WTC11 (cell line): ENCODE measurements at regions of chr3 and their contacts with region 1.

Region 1: DNA sequence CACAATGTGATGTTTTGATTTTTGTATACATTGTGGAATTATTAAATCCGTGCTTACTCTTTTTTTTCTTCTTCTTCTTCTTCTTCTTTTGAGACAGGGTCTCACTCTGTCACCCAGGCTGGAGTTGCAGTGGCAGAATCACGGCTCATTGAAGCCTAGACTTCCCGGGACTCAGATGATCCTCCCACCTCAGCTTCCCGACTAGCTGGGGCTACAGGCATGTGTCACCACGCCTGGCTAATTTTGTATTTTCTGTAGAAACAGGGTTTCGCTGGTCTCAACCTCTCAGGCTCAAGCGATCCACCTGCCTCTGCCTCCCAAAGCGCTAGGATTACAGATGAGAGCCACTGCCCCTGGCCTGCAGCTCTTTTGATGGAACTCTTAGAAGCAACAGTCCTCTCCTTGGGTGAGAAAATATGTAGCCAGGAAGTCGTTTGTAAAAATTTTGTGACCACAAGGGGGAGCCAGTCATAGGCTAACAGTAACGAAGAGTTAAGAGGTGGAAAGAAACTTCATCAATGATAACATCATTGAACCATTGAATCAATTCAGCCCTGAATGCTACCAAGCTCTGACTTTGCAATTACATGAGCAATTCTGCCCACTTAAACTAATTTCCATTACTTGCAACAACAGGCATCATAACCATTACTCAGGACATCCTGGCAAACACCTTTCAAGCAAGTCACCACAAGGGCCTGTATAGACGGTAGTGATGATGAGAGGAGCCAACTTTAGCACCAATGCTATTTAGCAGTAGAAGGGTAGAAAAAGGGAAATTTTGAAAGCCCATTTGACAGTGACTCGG is 16.7 kb upstream of the CMTM7 start:
- DNase-seq: peak; percentile 54
- ATAC-seq: peak; percentile 86
- H3K4me3 Mint-ChIP-seq: no peak overlapping the region
- H3K27ac Mint-ChIP-seq: peak overlapping the region; percentile 66; the same call in 1 of the 2 replicates
- H3K4me1 Mint-ChIP-seq: peaks cover 5% of the 10 kb centered on the region
- H3K27me3 Mint-ChIP-seq: no peaks in the 10 kb centered on the region
- CTCF ChIP-seq: peak; percentile 67

Region 2: GRCh38 chr3:32325957-32326356 is 49.0 kb before region 1 on chr3:
- CTCF ChIA-PET with region 1: interaction called, 16 read pairs
- POLR2A ChIA-PET with region 1: no interaction called
- DNase-seq: no peak
- ATAC-seq: no peak
- H3K4me3 Mint-ChIP-seq: no peak overlapping the region
- H3K27ac Mint-ChIP-seq: peak overlapping the region; percentile 13; the same call in 1 of the 2 replicates
- H3K4me1 Mint-ChIP-seq: peaks cover 47% of the 10 kb centered on the region
- H3K27me3 Mint-ChIP-seq: no peaks in the 10 kb centered on the region
- CTCF ChIP-seq: no peak

Region 3: DNA sequence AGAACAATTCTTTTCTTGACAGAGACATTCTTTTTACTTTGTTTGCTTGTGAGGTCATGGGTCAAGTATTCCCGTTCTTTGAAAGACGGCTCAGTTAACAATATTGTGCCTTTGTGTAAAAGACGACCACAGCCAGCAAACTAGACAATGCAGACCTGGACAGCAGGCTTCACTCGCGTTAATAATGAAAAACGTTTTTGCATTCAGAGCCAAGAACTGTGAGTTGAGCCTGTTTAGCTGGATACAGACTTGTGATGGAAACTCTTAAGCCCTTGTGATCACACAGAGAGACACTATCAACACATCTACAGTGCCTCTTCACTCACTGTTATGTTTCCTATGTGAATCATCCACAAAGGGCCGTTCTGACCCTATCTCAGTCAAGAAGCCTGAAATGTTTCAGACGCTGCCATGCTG is 20.6 kb before region 1 on chr3:
- CTCF ChIA-PET with region 1: interaction called, 10 read pairs
- POLR2A ChIA-PET with region 1: no interaction called
- DNase-seq: no peak
- ATAC-seq: no peak
- H3K4me3 Mint-ChIP-seq: no peak overlapping the region
- H3K27ac Mint-ChIP-seq: no peak overlapping the region
- H3K4me1 Mint-ChIP-seq: peaks cover 13% of the 10 kb centered on the region
- H3K27me3 Mint-ChIP-seq: no peaks in the 10 kb centered on the region
- CTCF ChIP-seq: no peak

Region 4: DNA sequence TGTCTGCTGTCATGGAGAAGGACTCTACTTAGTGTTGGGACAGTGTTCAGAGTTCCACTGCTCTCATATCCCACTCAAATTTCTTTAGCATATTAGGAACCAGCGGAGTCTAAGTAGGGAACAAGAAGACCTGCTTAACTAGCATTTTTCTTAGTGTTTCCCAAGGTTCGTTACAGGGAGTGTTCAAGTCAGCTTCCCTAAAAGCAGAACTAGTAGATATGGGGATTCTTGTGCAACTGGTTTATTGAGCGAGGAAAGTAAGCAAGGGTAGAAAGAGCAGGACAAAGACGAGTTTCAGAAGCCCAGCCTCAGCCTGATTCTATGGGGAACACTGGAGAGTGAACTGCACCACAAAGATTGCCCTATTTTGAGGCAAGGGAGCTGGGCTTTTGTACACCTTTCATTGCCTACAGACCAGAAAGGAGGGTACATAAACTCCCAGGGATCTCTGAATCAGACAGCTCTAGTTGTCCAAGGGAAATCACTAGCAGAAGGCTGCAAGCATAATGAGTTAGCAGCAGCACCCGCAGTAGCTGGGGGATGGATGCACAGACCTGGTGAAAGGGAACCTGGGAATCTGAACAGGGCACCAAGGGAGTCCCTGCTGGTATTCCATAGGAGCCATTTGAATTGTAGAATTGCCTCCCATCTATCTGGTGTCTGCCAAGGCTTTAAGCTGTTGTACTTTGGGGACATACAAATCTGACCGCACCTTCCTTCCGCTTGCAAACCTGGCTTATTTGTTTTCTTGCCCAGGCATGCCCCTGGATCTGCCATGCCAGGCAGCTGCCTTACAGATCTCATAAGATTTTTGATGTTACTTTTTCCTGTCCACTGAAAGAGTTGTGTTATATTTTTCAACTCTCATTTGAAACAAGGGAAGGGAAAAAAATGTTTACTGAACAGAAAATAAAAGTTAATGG is 31.8 kb after region 1 on chr3:
- CTCF ChIA-PET with region 1: interaction called, 10 read pairs
- POLR2A ChIA-PET with region 1: no interaction called
- DNase-seq: no peak
- ATAC-seq: peak; percentile 49
- H3K4me3 Mint-ChIP-seq: no peak overlapping the region
- H3K27ac Mint-ChIP-seq: peak overlapping the region; percentile 82
- H3K4me1 Mint-ChIP-seq: peaks cover 54% of the 10 kb centered on the region
- H3K27me3 Mint-ChIP-seq: no peaks in the 10 kb centered on the region
- CTCF ChIP-seq: no peak

Region 5: DNA sequence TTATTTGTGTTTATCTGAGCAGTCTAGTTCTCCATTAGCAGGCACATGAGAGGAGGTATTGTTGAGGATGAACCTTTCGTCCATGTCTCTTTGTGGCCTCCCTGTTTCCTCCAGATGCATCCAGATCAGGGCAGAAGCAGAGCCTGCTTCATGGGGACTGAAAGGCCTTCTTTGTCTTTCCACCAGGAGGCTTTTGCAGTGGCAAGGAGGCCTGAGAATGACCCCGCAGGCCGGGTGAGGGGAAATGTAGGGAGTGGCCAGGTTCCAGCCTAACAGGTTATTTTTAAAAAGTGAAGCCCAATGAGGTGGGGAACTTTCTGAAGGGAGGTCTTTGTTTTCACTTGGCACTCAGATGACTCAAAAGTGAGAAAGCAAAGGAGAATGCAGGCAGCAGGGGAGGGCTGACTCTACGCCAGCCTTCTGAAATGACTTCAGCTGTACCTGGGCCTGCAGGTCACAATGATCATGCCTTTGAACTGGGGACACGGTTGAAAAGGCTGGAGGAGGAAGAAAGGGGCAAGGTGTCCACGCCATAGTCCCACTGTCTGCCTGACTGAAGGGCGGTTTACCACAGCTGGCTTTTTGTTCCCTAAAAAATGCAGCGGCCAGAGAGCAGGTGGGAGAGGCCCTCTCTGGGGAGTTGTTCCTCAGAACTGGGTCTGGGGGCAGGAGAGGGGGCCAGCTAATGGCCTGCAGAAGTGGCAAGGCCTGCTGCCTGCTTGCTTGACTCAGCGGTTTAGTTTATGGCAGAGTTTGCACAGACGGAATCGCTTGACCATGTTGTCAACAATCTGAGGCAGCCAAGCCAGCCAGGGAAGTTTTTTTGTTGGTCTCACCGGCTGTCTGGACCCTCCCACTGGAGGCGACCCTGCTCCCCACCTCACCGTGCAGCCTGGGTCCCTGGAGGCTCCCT is 45.4 kb after region 1 on chr3:
- CTCF ChIA-PET with region 1: interaction called, 16 read pairs
- POLR2A ChIA-PET with region 1: no interaction called
- DNase-seq: peak; percentile 30
- ATAC-seq: peak; percentile 92
- H3K4me3 Mint-ChIP-seq: no peak overlapping the region
- H3K27ac Mint-ChIP-seq: peak overlapping the region; percentile 88
- H3K4me1 Mint-ChIP-seq: peaks cover 32% of the 10 kb centered on the region
- H3K27me3 Mint-ChIP-seq: no peaks in the 10 kb centered on the region
- CTCF ChIP-seq: no peak

Region 6: GRCh38 chr3:32467333-32468070 is 92.5 kb after region 1 on chr3:
- CTCF ChIA-PET with region 1: interaction called, 117 read pairs
- POLR2A ChIA-PET with region 1: no interaction called
- DNase-seq: peak; percentile 81
- ATAC-seq: peak; percentile 92
- H3K4me3 Mint-ChIP-seq: no peak overlapping the region
- H3K27ac Mint-ChIP-seq: no peak overlapping the region
- H3K4me1 Mint-ChIP-seq: peaks cover 8% of the 10 kb centered on the region
- H3K27me3 Mint-ChIP-seq: no peaks in the 10 kb centered on the region
- CTCF ChIP-seq: peak; percentile 100